Aorta (tissue), 5 donors: ENCODE measurements at regions of chr12 and their contacts with region 1.

Region 1: DNA sequence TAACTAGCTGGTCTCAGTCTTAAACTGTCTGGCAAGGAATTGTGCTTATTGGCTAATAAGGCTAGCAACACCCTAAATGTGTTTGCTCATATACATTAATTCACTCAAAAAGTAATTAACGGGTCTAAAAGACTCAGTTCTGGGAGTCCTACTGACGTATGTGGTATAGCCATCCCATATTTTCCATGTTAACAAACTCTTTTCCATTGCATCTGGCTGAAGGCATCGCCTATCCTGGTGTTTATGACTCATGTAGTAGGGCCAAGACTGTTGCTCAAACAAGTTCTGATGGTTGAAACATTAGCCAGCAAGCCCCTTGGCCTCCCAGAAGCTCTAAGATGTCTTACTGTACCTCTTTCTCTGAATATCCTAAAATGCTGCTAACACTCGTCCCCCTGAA is 98.5 kb downstream of the PHLDA1 start:
- DNase-seq: no peak
- ATAC-seq: peak; percentile 20
- H3K4me3 ChIP-seq: no peak overlapping the region
- H3K27ac ChIP-seq: no peak overlapping the region
- H3K4me1 ChIP-seq: peaks cover 0 to 3% of the 10 kb centered on the region in 2 donors
- H3K27me3 ChIP-seq: no peaks in the 10 kb centered on the region

Region 2: DNA sequence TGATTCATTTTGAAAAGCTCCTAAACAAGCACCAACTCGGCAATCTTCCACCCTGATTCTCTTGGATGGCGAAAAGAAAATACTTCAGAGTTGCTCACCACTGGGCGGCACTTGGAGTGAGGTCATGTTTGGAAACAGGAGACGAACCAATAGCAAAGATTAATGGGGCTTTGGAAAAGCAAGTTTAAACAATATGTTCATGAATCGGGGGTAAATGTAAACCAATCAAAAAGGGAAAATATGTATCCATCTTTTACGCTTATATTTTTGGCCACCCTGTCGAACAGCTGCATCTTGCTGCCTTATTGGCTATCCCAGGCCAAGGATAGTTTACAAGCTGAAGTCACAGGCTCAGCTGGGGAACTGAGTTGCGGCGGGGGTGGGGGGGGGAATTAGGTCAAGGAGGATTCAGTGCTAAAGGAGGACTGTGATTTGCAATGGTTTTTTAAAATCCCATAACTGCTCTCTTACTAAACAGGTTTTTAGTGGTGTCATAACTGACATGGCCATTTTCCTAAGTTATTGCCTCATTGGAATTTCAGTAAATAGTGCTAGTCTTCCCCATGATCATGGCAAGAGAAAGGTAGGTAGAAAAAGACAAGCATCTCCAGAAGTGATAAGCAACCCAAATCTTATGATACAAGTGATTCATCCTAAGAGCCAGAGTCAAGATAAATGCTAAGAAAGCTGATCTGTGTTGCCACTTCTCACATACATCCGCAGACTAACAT is 112.1 kb before region 1 on chr12:
- intact Hi-C with region 1: loop called in 1 of 2 experiments (anchors 10 kb)
- DNase-seq: peak in 1 of 2 donors; percentile 76
- ATAC-seq: peak; percentile 80
- H3K4me3 ChIP-seq: peak overlapping the region in 1 of 2 donors; percentile 47
- H3K27ac ChIP-seq: no peak overlapping the region
- H3K4me1 ChIP-seq: no peaks in the 10 kb centered on the region
- H3K27me3 ChIP-seq: no peaks in the 10 kb centered on the region

Region 3: GRCh38 chr12:77324763-77325468 is 1391.8 kb after region 1 on chr12:
- intact Hi-C with region 1: no loop called
- DNase-seq: peak; percentile 72 to 91
- ATAC-seq: peak; percentile 93
- H3K4me3 ChIP-seq: peak overlapping the region; percentile 76 to 87
- H3K27ac ChIP-seq: no peak overlapping the region
- H3K4me1 ChIP-seq: no peaks in the 10 kb centered on the region
- H3K27me3 ChIP-seq: no peaks in the 10 kb centered on the region